ENCODE measurements at regions of chr5 and their contacts with region 1.

Region 1: GRCh38 chr5:52767766-52768480 is 19.8 kb upstream of the ITGA1 start:
- H3K4me3 Mint-ChIP-seq: no peak overlapping the region
- H3K27ac Mint-ChIP-seq: peak overlapping the region; percentile 80
- H3K4me1 Mint-ChIP-seq: peaks cover 29% of the 10 kb centered on the region
- H3K27me3 Mint-ChIP-seq: no peaks in the 10 kb centered on the region

Region 2: DNA sequence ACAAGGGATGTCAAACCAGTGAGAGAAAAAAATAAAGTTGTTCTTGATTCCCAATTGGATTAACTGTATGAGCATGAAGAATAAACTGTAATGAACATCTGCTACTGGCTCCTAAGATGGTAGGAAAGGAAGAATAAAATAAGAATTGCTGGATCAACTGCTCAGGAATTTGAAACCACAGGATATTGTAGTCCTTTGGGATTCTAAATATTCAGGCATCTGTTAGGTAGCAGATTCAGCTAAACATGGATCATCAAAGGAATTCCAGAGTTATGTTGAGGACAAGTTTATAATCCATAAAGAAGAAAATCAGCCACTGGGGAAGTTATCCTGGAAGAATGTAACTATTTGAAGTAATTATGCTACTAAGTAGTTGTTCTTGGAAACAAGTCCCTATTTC is 1318.9 kb before region 1 on chr5:
- intact Hi-C with region 1: no loop called
- H3K4me3 Mint-ChIP-seq: no peak overlapping the region
- H3K27ac Mint-ChIP-seq: no peak overlapping the region
- H3K4me1 Mint-ChIP-seq: no peaks in the 10 kb centered on the region
- H3K27me3 Mint-ChIP-seq: no peaks in the 10 kb centered on the region

Region 3: DNA sequence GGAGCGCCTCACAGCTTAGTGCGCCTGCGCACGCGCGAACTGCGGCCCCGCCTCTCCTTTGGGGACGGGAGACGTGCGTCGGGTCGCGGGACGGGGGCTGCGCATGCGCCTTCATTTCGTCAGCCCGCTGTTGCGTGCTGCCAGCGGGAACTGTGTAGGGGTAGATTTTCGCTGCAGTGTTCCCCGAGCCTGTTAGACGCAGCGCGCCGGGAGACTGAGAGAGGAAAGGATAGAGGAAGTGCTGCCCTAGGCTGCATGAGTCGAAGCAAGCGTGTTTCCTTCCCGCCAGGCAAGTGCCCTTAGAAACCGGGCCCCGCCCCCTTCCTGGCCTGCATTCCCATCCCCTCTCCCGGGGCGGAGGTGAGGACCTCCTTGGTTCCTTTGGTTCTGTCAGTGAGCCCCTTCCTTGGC is 32.1 kb after region 1 on chr5:
- intact Hi-C with region 1: loop called (anchors 2 kb)
- H3K4me3 Mint-ChIP-seq: peak overlapping the region; percentile 82
- H3K27ac Mint-ChIP-seq: peak overlapping the region; percentile 97
- H3K4me1 Mint-ChIP-seq: peaks cover 60% of the 10 kb centered on the region
- H3K27me3 Mint-ChIP-seq: no peaks in the 10 kb centered on the region